Colonic mucosa (tissue), 4 donors: ENCODE measurements at regions of chr7 and their contacts with region 1.

Region 1: GRCh38 chr7:146090023-146090645 is 26.5 kb upstream of the CNTNAP2 start:
- DNase-seq: no peak
- H3K4me3 ChIP-seq: no peak overlapping the region
- H3K27ac ChIP-seq: no peak overlapping the region
- H3K4me1 ChIP-seq: no peaks in the 10 kb centered on the region
- H3K27me3 ChIP-seq: no peaks in the 10 kb centered on the region
- CTCF ChIP-seq: peak; percentile 41

Region 2: GRCh38 chr7:144854839-144855424 is 1235.2 kb before region 1 on chr7:
- intact Hi-C with region 1: loop called (anchors 5 kb)
- DNase-seq: no peak
- H3K4me3 ChIP-seq: no peak overlapping the region
- H3K27ac ChIP-seq: no peak overlapping the region
- H3K4me1 ChIP-seq: no peaks in the 10 kb centered on the region
- H3K27me3 ChIP-seq: no peaks in the 10 kb centered on the region
- CTCF ChIP-seq: peak; percentile 55

Region 3: GRCh38 chr7:144987686-144988085 is 1102.4 kb before region 1 on chr7:
- intact Hi-C with region 1: no loop called
- DNase-seq: no peak
- H3K4me3 ChIP-seq: no peak overlapping the region
- H3K27ac ChIP-seq: no peak overlapping the region
- H3K4me1 ChIP-seq: no peaks in the 10 kb centered on the region
- H3K27me3 ChIP-seq: no peaks in the 10 kb centered on the region
- CTCF ChIP-seq: no peak

Region 4: DNA sequence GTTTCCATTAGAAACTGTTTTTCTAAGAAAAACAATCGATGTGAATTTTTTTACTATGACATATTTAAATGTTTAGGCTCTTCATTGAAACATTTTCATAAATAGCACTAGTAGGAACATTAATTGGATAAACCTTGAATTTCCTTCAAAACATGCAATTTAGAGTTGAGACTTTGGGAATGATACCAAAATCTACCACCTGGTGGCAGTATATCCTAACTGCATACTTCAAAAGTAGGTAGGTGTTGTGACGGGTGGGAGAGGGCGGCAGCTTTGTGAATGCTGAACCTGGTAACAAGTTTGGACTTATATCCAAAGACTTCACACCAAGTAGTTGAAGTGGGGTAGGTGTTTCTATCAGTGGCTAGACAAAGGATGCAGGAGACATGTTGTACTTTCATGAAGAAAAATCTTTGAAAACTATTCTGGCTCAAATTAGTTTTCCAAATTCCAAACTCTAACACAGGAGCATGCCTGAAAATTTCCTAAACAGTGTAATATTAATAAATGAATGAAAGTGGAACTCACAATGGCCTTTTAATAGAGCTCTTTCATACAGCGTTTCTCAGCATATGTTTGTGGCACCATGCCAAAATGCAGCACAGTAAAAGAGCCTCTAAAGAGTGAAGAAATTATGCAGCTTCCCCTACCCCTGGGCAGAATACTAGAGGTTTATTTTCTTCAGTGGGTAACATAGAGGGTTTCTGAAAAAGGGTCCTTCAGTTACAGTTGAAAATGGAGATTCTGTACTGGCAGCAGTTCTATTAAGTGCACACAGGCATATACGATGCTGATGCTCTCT is 1053.3 kb before region 1 on chr7:
- intact Hi-C with region 1: loop called (anchors 2 kb)
- DNase-seq: peak; percentile 32
- H3K4me3 ChIP-seq: no peak overlapping the region
- H3K27ac ChIP-seq: no peak overlapping the region
- H3K4me1 ChIP-seq: no peaks in the 10 kb centered on the region
- H3K27me3 ChIP-seq: no peaks in the 10 kb centered on the region
- CTCF ChIP-seq: peak; percentile 60